ENCODE measurements at regions of chr7 and their contacts with region 1.

Region 1: GRCh38 chr7:100965723-100966541 is 3.4 kb upstream of the MUC12 start:
- DNase-seq: peak; percentile 91
- ATAC-seq: peak; percentile 87
- H3K4me3 Mint-ChIP-seq: peak overlapping the region; percentile 26
- H3K27ac Mint-ChIP-seq: no peak overlapping the region
- H3K4me1 Mint-ChIP-seq: peaks cover 9% of the 10 kb centered on the region
- H3K27me3 Mint-ChIP-seq: peaks cover 48% of the 10 kb centered on the region

Region 2: DNA sequence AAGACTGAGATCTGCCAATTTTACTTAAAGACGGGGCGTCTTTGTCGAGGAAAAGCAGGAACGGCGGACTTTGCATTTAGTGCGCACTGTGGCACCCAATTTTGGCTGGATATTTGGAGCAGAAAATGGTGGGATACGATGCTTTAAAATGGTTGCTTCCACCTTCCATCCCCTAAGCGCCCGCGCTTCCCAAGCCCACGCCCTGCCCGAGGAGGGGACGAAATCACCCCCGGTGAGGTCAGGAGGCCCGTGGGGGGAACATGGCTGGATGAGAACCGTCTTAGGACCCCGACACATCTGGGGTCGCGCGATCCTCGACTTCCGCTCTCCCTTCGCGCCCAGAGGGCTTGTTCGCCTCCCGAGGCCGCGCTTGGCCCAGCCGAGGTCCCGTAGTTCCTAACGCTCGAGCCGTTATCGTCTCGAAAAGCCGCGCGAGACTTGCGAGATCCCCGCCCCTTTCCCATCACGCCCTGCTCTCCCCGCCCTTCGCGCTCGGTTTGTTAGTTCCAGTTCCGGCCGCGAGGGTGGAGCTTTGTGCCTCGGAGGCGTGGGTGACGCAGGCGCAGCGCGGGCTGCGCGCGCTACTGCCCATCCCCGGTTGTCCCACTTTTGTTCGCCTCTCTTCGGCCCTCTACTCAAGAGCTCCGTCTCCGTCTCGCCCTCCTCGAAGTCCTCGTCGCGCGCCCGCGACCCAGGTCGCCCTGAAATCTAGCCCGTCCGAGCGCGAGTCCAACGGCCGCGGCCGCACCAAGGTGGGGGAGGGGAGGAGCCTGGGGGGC is 91.2 kb before region 1 on chr7 and contains the start of gene SRRT:
- CTCF ChIA-PET with region 1: no interaction called
- POLR2A ChIA-PET with region 1: no interaction called
- intact Hi-C with region 1: no loop called
- DNase-seq: peak; percentile 99
- ATAC-seq: peak; percentile 95
- H3K4me3 Mint-ChIP-seq: peak within 1 kb of the TSS; percentile 99
- H3K27ac Mint-ChIP-seq: peak within 1 kb of the TSS; percentile 99
- H3K4me1 Mint-ChIP-seq: peaks cover 45% of the 10 kb centered on the region
- H3K27me3 Mint-ChIP-seq: no peaks in the 10 kb centered on the region
- total RNA-seq, gene SRRT: 253 to 260 TPM

Region 3: GRCh38 chr7:100896732-100897608 is 69.0 kb before region 1 on chr7:
- CTCF ChIA-PET with region 1: no interaction called
- POLR2A ChIA-PET with region 1: no interaction called
- intact Hi-C with region 1: loop called in 1 of 2 experiments (anchors 1 kb)
- DNase-seq: peak; percentile 74
- ATAC-seq: peak; percentile 48
- H3K4me3 Mint-ChIP-seq: no peak overlapping the region
- H3K27ac Mint-ChIP-seq: no peak overlapping the region
- H3K4me1 Mint-ChIP-seq: peaks cover 9% of the 10 kb centered on the region
- H3K27me3 Mint-ChIP-seq: peaks cover 31% of the 10 kb centered on the region

Region 4: DNA sequence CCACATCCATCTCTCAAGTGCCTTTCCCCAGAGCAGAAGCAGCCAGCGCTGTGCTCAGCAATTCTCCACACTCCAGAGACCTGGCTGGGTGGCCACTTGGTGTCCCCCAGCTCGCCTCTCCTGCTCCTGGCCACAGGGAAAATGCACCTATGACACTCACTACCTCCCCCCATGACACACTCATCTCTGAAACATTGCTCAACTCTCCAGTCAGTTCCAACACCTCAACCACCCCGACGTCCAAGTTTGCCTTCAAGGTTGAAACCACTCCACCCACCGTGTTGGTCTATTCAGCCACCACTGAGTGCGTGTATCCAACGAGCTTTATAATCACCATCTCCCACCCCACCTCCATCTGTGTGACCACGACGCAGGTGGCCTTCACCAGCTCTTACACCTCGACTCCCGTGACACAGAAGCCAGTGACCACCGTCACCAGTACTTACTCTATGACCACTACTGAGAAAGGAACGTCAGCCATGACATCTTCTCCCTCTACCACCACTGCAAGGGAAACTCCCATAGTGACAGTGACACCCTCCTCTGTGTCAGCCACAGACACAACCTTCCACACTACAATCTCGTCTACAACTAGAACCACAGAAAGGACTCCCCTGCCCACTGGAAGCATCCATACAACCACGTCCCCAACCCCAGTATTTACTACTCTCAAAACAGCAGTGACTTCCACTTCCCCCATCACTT is 13.9 kb before region 1 on chr7:
- CTCF ChIA-PET with region 1: interaction called, 3 read pairs
- POLR2A ChIA-PET with region 1: no interaction called
- intact Hi-C with region 1: loop called in 1 of 2 experiments (anchors 2 kb)
- DNase-seq: peak; percentile 23
- ATAC-seq: peak; percentile 62
- H3K4me3 Mint-ChIP-seq: no peak overlapping the region
- H3K27ac Mint-ChIP-seq: no peak overlapping the region
- H3K4me1 Mint-ChIP-seq: no peaks in the 10 kb centered on the region
- H3K27me3 Mint-ChIP-seq: peaks cover 12% of the 10 kb centered on the region

Region 5: GRCh38 chr7:101077303-101078089 is 111.6 kb after region 1 on chr7:
- CTCF ChIA-PET with region 1: no interaction called
- POLR2A ChIA-PET with region 1: no interaction called
- intact Hi-C with region 1: loop called (anchors 1 to 2 kb)
- DNase-seq: peak; percentile 91
- ATAC-seq: peak; percentile 99
- H3K4me3 Mint-ChIP-seq: no peak overlapping the region
- H3K27ac Mint-ChIP-seq: no peak overlapping the region
- H3K4me1 Mint-ChIP-seq: peaks cover 7% of the 10 kb centered on the region
- H3K27me3 Mint-ChIP-seq: peaks cover 3% of the 10 kb centered on the region